AG04449 (cell line): ENCODE measurements at regions of chr16 and their contacts with region 1.

Region 1: GRCh38 chr16:30984669-30985400 is at the start of gene HSD3B7:
- DNase-seq: no peak
- H3K4me3 ChIP-seq: peak within 1 kb of the TSS; percentile 57
- CTCF ChIP-seq: peak; percentile 94

Region 2: GRCh38 chr16:30964574-30965226 is 20.1 kb before region 1 on chr16:
- CTCF ChIA-PET with region 1: interaction called, 98 read pairs
- POLR2A ChIA-PET with region 1: no interaction called
- DNase-seq: no peak
- H3K4me3 ChIP-seq: no peak overlapping the region
- CTCF ChIP-seq: no peak

Region 3: GRCh38 chr16:31002250-31002700 is 17.4 kb after region 1 on chr16:
- CTCF ChIA-PET with region 1: interaction called, 49 read pairs
- POLR2A ChIA-PET with region 1: interaction called, 4 read pairs
- DNase-seq: no peak
- H3K4me3 ChIP-seq: no peak overlapping the region
- CTCF ChIP-seq: no peak

Region 4: GRCh38 chr16:31064882-31065461 is 80.1 kb after region 1 on chr16:
- CTCF ChIA-PET with region 1: interaction called, 16 read pairs
- POLR2A ChIA-PET with region 1: interaction called, 6 read pairs
- DNase-seq: peak; percentile 82
- H3K4me3 ChIP-seq: no peak overlapping the region
- CTCF ChIP-seq: no peak

Region 5: GRCh38 chr16:31142109-31143010 is 157.5 kb after region 1 on chr16:
- CTCF ChIA-PET with region 1: interaction called, 59 read pairs
- POLR2A ChIA-PET with region 1: interaction called, 3 read pairs
- DNase-seq: peak; percentile 84
- H3K4me3 ChIP-seq: peak overlapping the region; percentile 57
- CTCF ChIP-seq: peak; percentile 99

Region 6: DNA sequence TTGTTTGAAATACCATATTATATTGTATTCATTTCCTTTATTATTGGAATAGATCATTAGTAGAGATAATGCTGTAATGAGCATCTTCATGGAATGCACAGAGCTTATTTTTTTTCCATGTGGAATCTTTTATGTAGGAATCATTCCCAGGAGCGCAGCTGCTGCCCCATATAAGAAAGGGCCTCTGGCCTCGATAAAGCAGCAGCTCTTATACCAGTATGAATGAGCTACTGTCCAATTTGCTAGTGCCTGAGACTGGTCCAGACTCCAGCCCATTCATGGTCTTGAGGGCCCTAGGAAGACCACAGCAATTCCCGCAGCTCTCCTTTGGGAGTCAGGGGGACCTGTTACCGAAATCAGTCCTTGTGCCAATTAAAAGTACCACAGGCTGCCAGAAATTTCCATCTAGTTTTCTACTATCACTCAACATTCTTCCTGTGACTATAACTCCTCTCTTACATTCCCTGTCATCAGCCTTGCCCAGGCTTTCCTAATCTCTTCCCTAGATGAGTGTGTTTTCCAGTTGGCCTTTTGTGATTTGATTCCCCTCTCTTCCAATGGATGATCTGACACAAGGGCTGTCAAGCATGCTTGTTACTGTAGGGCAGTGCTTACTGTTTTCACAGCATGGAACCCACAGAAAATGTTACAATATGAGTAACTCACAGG is 455.8 kb after region 1 on chr16:
- CTCF ChIA-PET with region 1: interaction called, 54 read pairs
- POLR2A ChIA-PET with region 1: interaction called, 4 read pairs
- DNase-seq: no peak
- H3K4me3 ChIP-seq: no peak overlapping the region
- CTCF ChIP-seq: no peak

Region 7: GRCh38 chr16:31868691-31869167 is 883.9 kb after region 1 on chr16:
- CTCF ChIA-PET with region 1: interaction called, 23 read pairs
- POLR2A ChIA-PET with region 1: no interaction called
- DNase-seq: no peak
- H3K4me3 ChIP-seq: no peak overlapping the region
- CTCF ChIP-seq: peak; percentile 66